ENCODE measurements at regions of chr21 and their contacts with region 1.

Region 1: DNA sequence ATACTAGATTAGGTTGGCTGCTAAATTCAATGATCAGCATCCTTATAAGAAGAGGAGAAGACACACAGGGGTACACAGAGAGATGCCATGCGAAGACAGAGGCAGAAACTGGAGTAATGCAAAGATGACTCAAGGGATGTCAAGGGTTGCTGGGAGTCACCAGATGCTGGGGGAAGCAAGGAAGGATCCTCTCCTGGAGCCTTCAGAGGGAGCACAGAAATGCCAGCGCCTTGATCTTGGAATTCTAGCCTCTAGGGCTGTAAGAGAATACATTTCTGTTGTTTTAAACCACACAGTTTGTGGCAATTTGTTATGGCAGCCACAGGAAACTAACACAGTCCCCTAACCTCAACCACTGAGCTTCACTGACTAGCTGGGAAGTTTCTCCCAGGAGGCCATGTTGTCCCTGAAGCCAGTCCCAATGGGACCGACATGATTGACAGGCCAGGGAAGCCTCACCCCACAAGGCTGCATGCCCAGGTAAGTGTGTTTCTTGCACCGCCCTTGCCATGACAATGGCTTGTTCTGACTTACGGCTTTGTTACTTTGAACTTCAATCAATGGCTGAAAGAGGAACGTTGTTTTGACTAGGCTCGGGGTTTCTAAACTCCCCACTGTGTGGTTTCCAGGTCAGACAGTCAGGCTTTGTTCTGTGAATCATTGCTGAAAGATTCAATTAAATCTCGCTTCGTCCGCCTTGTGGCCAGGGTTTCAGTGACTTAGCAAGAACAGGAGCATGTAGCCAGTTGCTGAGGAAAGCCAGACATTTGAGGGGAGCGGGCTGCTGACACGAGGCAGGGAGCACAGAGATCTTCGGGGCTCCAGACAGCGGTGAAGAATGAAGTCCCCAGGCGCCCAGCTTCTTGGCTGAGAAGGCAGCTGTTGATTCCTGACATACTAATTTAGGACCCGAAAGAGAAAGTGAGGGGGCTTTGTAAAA is 62.3 kb downstream of the RUNX1 start:
- DNase-seq: peak; percentile 54 to 87 (median 66)
- H3K4me3 ChIP-seq: peak overlapping the region in 1 of 2 donors; percentile 1
- H3K4me3 Mint-ChIP-seq: peak overlapping the region; percentile 74 to 93 (median 80)
- H3K27ac ChIP-seq: peak overlapping the region; percentile 54
- H3K27ac Mint-ChIP-seq: peak overlapping the region; percentile 93 to 97 (median 95)
- H3K4me1 ChIP-seq: peaks cover 100% of the 10 kb centered on the region
- H3K4me1 Mint-ChIP-seq: peaks cover 36 to 95% (median 87%) of the 10 kb centered on the region in 4 donors
- H3K27me3 ChIP-seq: no peaks in the 10 kb centered on the region
- H3K27me3 Mint-ChIP-seq: no peaks in the 10 kb centered on the region

Region 2: DNA sequence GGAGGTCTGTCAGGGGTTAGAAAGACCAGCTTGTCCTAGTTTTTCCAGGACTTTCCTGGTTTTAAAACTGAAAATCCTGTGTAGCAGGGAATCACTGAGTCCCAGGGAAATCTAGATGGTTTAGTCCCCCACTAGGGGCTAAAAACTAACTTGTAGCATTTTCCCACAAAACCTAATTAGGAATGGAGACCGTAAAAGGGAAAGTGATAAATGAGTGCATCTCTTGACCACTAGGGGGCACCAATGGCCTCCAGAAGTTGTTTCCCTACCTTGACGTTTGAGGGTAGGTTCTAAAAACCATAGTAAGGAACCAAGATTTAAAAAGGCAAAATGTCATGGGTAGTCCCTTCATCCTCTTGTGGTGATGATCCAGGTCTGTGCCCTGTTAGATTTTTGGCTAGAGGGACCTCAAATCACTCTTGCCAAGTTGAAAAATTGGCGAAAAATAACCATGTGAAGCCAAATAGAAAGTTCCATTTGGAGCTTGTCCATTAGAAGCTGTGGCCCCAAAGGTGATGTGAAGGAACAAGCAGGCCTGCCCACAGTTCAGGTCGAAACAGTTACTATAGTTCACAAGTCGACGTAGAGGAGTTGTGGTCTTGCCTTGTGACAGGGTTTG is 293.5 kb before region 1 on chr21:
- CTCF ChIA-PET with region 1: no interaction called
- POLR2A ChIA-PET with region 1: no interaction called
- intact Hi-C with region 1: no loop called
- DNase-seq: peak in 4 of 5 donors; percentile 42 to 57 (median 50)
- H3K4me3 ChIP-seq: no peak overlapping the region
- H3K4me3 Mint-ChIP-seq: no peak overlapping the region
- H3K27ac ChIP-seq: no peak overlapping the region
- H3K27ac Mint-ChIP-seq: no peak overlapping the region
- H3K4me1 ChIP-seq: no peaks in the 10 kb centered on the region
- H3K4me1 Mint-ChIP-seq: peaks cover 0 to 4% (median 0%) of the 10 kb centered on the region in 4 donors
- H3K27me3 ChIP-seq: no peaks in the 10 kb centered on the region
- H3K27me3 Mint-ChIP-seq: peaks cover 13 to 27% of the 10 kb centered on the region in 2 donors

Region 3: DNA sequence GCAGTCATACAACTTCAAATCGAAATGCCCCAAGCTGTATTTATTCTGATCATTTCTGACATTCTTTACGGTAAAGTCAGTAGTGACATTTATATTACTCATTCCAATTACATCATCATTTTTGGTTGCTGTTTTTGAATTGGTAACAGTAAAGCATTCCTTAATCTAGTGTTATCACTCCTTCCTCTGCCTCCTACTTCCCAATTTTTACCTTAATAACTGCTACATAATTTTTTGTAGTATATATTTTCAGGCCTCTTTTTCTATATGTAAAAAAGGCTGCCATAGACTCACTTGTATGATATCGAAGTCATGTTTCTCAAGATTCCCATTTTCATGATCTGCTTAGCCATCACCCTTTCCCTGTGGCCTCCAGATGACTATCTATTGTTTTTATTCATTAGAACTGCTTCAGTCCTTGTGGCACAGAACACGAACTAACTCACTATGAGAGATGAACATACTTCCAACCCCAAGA is 104.9 kb before region 1 on chr21:
- CTCF ChIA-PET with region 1: no interaction called
- POLR2A ChIA-PET with region 1: no interaction called
- intact Hi-C with region 1: no loop called
- DNase-seq: no peak
- H3K4me3 ChIP-seq: no peak overlapping the region
- H3K4me3 Mint-ChIP-seq: no peak overlapping the region
- H3K27ac ChIP-seq: no peak overlapping the region
- H3K27ac Mint-ChIP-seq: peak overlapping the region in 5 of 7 donors; percentile 22 to 78 (median 51)
- H3K4me1 ChIP-seq: peaks cover 48% of the 10 kb centered on the region
- H3K4me1 Mint-ChIP-seq: peaks cover 30 to 65% (median 44%) of the 10 kb centered on the region in 4 donors
- H3K27me3 ChIP-seq: no peaks in the 10 kb centered on the region
- H3K27me3 Mint-ChIP-seq: no peaks in the 10 kb centered on the region

Region 4: DNA sequence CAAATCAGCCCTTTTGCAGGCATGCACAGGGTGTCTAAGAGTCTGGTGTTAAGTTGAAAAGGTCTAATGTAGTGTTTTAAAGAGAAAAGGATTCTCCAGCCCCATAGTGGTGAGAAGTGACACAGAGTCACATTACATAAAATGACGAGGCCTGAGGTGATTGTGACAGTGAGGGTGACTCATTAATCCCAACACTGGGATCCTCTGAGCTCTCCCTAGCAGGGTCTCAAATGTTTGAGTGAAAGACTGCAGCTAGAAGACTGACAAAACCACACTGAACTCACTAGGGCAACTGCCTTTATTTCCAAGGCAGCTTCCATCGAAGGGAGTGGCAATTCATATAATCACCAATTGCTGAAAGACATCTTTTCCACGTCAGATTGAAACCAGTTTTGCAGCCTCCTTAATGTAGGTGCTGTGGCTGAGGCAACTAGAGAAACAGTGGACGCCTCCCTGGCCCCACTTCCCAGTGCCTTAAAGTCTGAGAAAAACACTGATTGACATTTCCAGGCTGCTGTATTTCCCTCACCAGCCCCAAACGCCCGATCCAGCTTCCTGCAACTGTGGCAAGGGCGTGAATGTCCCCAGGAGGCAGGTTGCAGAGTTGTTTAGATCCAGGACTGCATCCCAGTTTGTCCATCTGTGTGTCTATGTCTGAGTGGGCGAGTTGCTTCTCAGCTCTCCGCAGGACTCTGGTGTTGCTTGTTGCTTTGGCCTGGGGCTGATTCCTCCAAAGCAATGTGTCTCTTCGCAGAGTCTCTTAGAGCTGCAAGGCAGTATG is 19.1 kb before region 1 on chr21:
- CTCF ChIA-PET with region 1: interaction called, 16 read pairs
- POLR2A ChIA-PET with region 1: interaction called, 46 read pairs
- intact Hi-C with region 1: loop called (anchors 2 kb)
- DNase-seq: peak in 1 of 5 donors; percentile 70
- H3K4me3 ChIP-seq: no peak overlapping the region
- H3K4me3 Mint-ChIP-seq: peak overlapping the region in 7 of 8 donors; percentile 37 to 88 (median 71)
- H3K27ac ChIP-seq: peak overlapping the region; percentile 29
- H3K27ac Mint-ChIP-seq: peak overlapping the region; percentile 66 to 94 (median 86)
- H3K4me1 ChIP-seq: peaks cover 91% of the 10 kb centered on the region
- H3K4me1 Mint-ChIP-seq: peaks cover 74 to 98% (median 89%) of the 10 kb centered on the region in 4 donors
- H3K27me3 ChIP-seq: no peaks in the 10 kb centered on the region
- H3K27me3 Mint-ChIP-seq: no peaks in the 10 kb centered on the region

Region 5: DNA sequence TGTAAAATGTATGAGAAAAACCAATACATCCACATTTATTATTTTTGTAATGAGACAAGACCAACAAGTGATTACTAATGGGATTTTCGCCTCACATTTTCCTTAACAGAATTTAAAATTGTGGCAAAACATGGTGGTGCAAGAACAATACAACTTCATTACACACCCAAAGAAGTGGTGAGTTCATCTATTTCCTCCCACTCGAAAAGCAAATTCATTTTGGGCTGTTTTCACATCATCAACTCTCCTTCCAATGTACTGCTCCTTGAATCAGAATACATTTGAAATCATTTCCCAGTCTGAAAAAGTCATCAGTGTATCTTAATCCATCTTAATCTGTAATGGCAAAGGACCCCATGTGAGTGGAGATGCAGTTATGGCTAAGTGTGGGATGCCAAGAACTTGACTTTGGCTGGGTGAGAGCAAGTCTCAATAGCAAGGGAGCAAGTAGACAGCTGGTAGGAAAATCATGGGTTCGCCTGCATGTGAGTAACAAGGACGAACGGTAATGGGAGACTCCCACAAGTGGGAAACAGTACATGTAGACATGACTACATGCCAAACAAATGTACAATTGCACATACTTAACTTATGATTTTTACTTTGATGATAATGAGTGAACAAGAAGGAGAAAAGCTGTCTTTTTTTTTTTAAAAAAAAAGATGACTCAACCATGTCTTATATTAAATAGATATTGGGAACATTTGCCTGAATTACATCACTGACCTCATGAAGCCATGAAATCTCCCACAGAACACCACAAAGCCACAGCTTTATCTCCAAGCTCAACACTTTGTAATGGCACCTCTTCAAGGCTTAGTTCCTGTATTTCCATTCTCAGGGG is 16.3 kb after region 1 on chr21:
- CTCF ChIA-PET with region 1: interaction called, 6 read pairs
- POLR2A ChIA-PET with region 1: interaction called, 14 read pairs
- intact Hi-C with region 1: loop called (anchors 2 kb)
- DNase-seq: no peak
- H3K4me3 ChIP-seq: no peak overlapping the region
- H3K4me3 Mint-ChIP-seq: peak overlapping the region in 2 of 8 donors; percentile 3 to 24
- H3K27ac ChIP-seq: no peak overlapping the region
- H3K27ac Mint-ChIP-seq: peak overlapping the region in 6 of 7 donors; percentile 3 to 72 (median 12)
- H3K4me1 ChIP-seq: peaks cover 81% of the 10 kb centered on the region
- H3K4me1 Mint-ChIP-seq: peaks cover 76 to 97% (median 87%) of the 10 kb centered on the region in 4 donors
- H3K27me3 ChIP-seq: no peaks in the 10 kb centered on the region
- H3K27me3 Mint-ChIP-seq: no peaks in the 10 kb centered on the region

Region 6: GRCh38 chr21:35026617-35027562 is 40.1 kb after region 1 on chr21:
- CTCF ChIA-PET with region 1: interaction called, 3 read pairs
- POLR2A ChIA-PET with region 1: interaction called, 21 read pairs
- intact Hi-C with region 1: loop called (anchors 1 kb)
- DNase-seq: peak; percentile 88 to 91 (median 89)
- H3K4me3 ChIP-seq: peak overlapping the region; percentile 48 to 53
- H3K4me3 Mint-ChIP-seq: peak overlapping the region; percentile 83 to 97 (median 89)
- H3K27ac ChIP-seq: peak overlapping the region; percentile 71
- H3K27ac Mint-ChIP-seq: peak overlapping the region; percentile 97 to 100 (median 98)
- H3K4me1 ChIP-seq: peaks cover 92% of the 10 kb centered on the region
- H3K4me1 Mint-ChIP-seq: peaks cover 72 to 96% (median 87%) of the 10 kb centered on the region in 4 donors
- H3K27me3 ChIP-seq: no peaks in the 10 kb centered on the region
- H3K27me3 Mint-ChIP-seq: no peaks in the 10 kb centered on the region

Region 7: DNA sequence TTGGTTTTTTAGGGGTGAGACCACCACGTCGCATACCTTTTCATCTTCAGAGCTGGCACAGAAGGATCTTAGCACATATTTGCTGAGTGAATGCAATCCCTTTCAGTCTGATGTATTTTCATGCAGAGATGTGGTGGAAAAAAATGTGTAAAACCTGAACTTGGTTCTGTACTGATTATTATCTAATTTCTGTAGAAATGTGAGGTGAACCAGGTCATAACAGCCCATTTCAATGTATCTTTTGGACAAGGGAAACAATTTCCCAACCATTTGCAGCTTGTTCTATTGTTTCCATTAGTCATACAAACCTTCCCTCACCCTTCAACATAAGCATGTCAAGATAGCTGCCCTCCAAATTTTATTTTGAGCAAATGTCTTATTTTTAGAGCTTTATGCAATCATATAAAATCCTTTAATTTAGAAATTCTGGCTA is 109.0 kb after region 1 on chr21:
- CTCF ChIA-PET with region 1: no interaction called
- POLR2A ChIA-PET with region 1: no interaction called
- intact Hi-C with region 1: no loop called
- DNase-seq: no peak
- H3K4me3 ChIP-seq: no peak overlapping the region
- H3K4me3 Mint-ChIP-seq: no peak overlapping the region
- H3K27ac ChIP-seq: no peak overlapping the region
- H3K27ac Mint-ChIP-seq: no peak overlapping the region
- H3K4me1 ChIP-seq: no peaks in the 10 kb centered on the region
- H3K4me1 Mint-ChIP-seq: no peaks in the 10 kb centered on the region
- H3K27me3 ChIP-seq: no peaks in the 10 kb centered on the region
- H3K27me3 Mint-ChIP-seq: no peaks in the 10 kb centered on the region

Region 8: DNA sequence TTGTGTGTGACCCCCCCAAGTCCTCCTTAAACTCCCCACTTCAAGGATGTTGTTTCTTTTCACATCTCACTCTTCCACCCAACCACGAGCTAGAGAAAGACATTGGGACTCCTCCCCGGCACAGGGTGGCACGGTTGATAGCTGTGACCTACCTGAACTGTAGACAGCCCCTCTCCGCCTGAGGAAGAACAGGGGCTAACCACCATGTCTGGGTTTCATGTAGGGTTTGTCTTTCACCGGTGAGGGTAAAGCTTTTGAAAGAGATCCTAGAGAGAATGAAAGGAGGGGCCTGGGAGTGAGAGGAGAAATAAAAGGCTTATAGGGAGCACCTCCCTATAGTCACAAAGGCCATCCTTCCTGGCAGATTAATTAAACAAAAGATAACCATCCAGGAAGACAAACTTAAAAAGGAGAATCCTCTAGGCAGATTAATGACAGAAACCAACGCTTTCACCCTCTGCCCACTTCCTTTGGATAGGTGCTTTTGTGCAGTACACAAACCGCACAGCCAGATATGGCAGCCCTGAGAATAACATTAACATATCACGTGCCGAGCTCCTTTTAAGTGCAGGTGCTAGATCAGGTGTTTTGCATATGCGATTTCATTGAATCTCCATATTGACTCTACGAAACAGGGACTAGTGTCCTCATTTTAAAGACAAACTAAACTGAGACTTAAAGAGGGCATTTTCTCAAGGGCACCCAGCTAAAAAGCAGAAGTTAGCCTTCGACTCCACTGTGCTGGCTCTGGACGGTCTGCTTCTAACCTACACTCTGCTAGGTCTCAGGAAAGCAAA is 240.3 kb after region 1 on chr21:
- CTCF ChIA-PET with region 1: no interaction called
- POLR2A ChIA-PET with region 1: interaction called, 3 read pairs
- intact Hi-C with region 1: loop called (anchors 10 kb)
- DNase-seq: peak; percentile 60 to 79 (median 69)
- H3K4me3 ChIP-seq: peak overlapping the region; percentile 34 to 48
- H3K4me3 Mint-ChIP-seq: peak overlapping the region; percentile 0 to 74 (median 58)
- H3K27ac ChIP-seq: no peak overlapping the region
- H3K27ac Mint-ChIP-seq: peak overlapping the region; percentile 72 to 92 (median 85)
- H3K4me1 ChIP-seq: peaks cover 37% of the 10 kb centered on the region
- H3K4me1 Mint-ChIP-seq: peaks cover 26 to 46% (median 36%) of the 10 kb centered on the region in 4 donors
- H3K27me3 ChIP-seq: no peaks in the 10 kb centered on the region
- H3K27me3 Mint-ChIP-seq: no peaks in the 10 kb centered on the region